ENCODE measurements at regions of chr22 and their contacts with region 1.

Region 1: DNA sequence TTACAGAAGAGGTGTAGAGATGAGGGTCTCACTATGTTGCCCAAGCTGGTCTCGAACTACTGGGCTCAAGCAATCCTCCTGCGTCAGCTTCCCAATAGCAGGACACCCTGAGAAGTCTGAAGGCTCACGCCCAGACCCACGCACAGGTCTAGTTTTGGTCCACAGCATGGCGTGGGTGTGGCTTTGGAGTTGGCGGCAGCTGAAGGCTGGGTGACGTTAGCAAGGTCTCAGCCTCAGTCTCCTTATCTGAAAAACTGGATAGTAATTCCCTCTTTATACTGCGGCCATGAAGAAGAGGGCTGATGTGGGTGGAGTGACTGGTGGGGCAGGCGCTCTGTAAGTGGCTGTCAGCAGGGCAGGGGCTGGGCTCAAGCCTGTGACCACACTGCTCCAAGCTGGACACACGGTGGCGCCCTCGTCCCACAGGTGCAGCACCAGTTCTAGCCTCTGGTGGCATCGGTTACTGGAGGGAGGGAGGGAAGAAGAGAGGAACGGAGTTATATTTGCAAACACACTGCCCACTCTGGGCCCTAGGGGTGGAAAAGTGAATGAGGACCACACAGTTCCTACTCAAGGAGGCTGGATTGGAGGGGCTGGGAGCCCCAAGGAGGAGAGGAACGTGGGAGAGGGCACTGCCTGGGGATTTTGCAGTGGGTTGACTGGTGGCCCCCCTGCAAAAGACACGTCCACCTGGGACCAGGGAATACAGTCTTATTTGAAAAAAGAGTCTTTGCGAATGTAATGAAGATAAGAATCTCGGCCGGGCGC is 19.6 kb upstream of the CARD10 start:
- DNase-seq: peak; percentile 97 to 98
- ATAC-seq: peak; percentile 98
- H3K4me3 ChIP-seq: no peak overlapping the region
- H3K27ac ChIP-seq: no peak overlapping the region
- H3K4me1 ChIP-seq: no peaks in the 10 kb centered on the region
- H3K27me3 ChIP-seq: no peaks in the 10 kb centered on the region

Region 2: GRCh38 chr22:37571258-37571991 is 32.7 kb after region 1 on chr22:
- intact Hi-C with region 1: loop called in 1 of 2 experiments (anchors 5 kb)
- DNase-seq: no peak
- ATAC-seq: no peak
- H3K4me3 ChIP-seq: no peak overlapping the region
- H3K27ac ChIP-seq: no peak overlapping the region
- H3K4me1 ChIP-seq: no peaks in the 10 kb centered on the region
- H3K27me3 ChIP-seq: no peaks in the 10 kb centered on the region

Region 3: DNA sequence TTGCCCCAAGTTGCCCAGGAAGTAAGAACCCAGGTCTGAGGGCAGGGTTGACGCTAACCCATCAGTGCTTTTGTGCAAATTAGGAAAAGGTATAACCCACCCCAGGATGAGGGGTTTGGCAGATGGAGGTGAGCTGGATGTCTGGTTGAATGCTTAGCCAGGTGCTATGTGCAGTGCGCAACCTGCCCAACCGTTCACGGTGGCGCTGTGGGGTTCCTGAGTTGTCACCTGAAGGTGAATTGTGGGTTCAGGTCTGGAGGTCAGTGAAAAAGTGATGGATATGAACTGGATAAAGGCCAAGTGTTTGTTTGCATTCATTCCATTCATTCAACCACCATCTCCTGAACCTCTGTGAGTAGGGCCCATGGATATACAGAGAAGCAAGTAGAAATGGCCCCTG is 55.5 kb after region 1 on chr22:
- intact Hi-C with region 1: loop called (anchors 1 to 5 kb)
- DNase-seq: no peak
- ATAC-seq: no peak
- H3K4me3 ChIP-seq: no peak overlapping the region
- H3K27ac ChIP-seq: no peak overlapping the region
- H3K4me1 ChIP-seq: no peaks in the 10 kb centered on the region
- H3K27me3 ChIP-seq: peaks cover 0 to 2% of the 10 kb centered on the region in 2 donors

Measured in aorta (tissue), 5 donors.